ENCODE measurements at regions of chr7 and their contacts with region 1.

Region 1: DNA sequence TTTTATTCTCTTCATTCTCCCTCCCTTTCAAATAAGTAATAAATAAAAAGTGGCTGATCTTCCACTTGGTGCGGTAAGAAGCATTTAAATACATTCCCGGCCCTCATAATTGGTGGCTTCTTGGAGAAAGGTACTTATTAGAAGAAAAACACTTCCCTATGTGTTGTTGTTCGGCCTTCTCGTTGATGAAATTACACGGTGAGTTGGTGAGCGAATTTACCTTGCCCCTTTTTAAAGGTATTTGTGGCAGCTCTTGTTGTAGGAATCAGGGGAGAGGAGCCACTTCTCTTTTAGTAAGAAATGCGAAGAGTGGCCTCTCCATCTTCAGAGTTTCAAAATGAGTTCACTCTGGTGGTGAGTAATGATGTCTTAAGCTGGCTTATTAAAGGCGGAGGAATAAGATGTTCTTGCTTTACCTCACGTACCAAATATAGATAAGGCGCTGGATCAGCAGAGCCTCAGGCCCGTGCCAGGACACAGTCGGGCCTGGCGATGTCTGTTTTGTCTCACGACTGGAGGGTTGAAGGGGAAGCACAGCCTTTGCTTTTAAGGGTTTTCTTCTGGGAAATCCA is 135.9 kb downstream of the CUX1 start:
- DNase-seq: peak; percentile 38
- H3K4me3 Mint-ChIP-seq: peak overlapping the region; percentile 24
- H3K27ac Mint-ChIP-seq: peak overlapping the region; percentile 86
- H3K4me1 Mint-ChIP-seq: peaks cover 38% of the 10 kb centered on the region
- H3K27me3 Mint-ChIP-seq: no peaks in the 10 kb centered on the region

Region 2: GRCh38 chr7:101983147-101983811 is 29.9 kb after region 1 on chr7:
- CTCF ChIA-PET with region 1: interaction called, 3 read pairs
- intact Hi-C with region 1: loop called (anchors 2 kb)
- DNase-seq: no peak
- H3K4me3 Mint-ChIP-seq: no peak overlapping the region
- H3K27ac Mint-ChIP-seq: no peak overlapping the region
- H3K4me1 Mint-ChIP-seq: peaks cover 11% of the 10 kb centered on the region
- H3K27me3 Mint-ChIP-seq: no peaks in the 10 kb centered on the region